Esophagus muscularis mucosa (tissue), 4 donors: ENCODE measurements at regions of chr16 and their contacts with region 1.

Region 1: DNA sequence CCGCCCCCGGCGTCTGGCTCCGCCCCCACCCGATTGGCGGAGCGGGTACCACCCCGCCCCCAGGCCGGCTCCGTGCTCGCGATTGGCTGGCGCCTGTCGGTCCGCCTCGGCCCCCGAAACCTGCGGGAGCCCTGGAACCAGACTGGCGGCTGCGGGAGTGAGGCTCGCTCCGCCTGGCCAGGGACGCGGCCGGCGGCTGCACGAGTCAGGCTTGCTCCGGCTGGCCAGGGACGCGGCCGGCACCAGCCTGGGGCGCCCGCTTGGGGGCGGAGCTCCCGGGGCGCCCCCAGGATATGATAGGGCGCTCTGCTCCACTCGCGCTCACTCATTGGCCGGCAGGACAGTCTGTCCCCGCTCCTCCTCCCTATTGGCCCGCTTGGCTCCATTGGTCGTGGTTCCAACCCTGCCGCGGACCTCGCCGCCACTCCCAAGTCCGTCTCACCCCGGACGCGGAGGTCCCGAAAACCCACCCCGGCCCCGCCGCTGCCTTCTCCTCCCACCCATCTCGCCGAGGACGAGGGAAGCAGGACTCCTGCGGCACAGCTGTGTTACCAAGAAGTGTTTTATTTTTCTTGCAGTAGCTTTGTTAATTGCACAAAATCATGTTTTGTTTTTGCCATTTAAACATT is 340 bp upstream of the ROGDI start:
- DNase-seq: peak; percentile 97
- H3K4me3 ChIP-seq: peak overlapping the region; percentile 73 to 92 (median 83)
- H3K27ac ChIP-seq: peak overlapping the region; percentile 87 to 93 (median 90)
- H3K4me1 ChIP-seq: peaks cover 31 to 48% (median 45%) of the 10 kb centered on the region in 4 donors
- H3K27me3 ChIP-seq: no peaks in the 10 kb centered on the region
- CTCF ChIP-seq: peak in 1 of 3 experiments; percentile 33
- EP300 ChIP-seq: no peak
- POLR2A ChIP-seq: no peak

Region 2: DNA sequence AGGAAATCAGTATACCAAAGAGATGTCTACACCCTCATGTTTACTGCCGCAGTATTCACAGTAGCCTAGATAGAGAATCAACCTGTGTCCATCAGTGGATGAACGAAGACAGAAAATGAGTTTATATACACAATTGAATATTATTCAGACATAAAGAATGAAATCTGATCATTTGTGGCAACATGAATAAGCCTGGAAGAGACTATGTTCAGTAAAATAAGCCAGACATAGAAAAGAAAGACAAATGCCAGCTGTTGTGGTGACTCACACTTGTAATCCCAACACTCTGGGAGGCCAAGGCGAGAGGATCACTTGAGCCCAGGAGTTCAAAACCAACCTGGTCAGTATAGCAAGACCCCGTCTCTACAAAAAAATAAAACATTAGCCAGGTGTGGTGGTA is 93.3 kb before region 1 on chr16:
- intact Hi-C with region 1: no loop called
- DNase-seq: no peak
- H3K4me3 ChIP-seq: no peak overlapping the region
- H3K27ac ChIP-seq: no peak overlapping the region
- H3K4me1 ChIP-seq: no peaks in the 10 kb centered on the region
- H3K27me3 ChIP-seq: no peaks in the 10 kb centered on the region
- CTCF ChIP-seq: no peak
- EP300 ChIP-seq: no peak
- POLR2A ChIP-seq: no peak

Region 3: GRCh38 chr16:4734063-4734729 is 68.6 kb before region 1 on chr16 and contains the starts of genes ANKS3 and DNAAF8:
- intact Hi-C with region 1: loop called (anchors 5 kb)
- DNase-seq: peak; percentile 98
- H3K4me3 ChIP-seq: peak within 1 kb of the TSS; percentile 82 to 99 (median 90)
- H3K27ac ChIP-seq: peak within 1 kb of the TSS; percentile 79 to 97 (median 88)
- H3K4me1 ChIP-seq: peaks cover 12 to 27% (median 19%) of the 10 kb centered on the region in 4 donors
- H3K27me3 ChIP-seq: peaks cover 0 to 3% (median 0%) of the 10 kb centered on the region in 4 donors
- CTCF ChIP-seq: peak in 1 of 3 experiments; percentile 11
- EP300 ChIP-seq: no peak
- POLR2A ChIP-seq: no peak
- total RNA-seq, gene ANKS3: 17.0 to 29.0 (median 24.7) TPM
- total RNA-seq, gene DNAAF8: 0.42 to 1.7 (median 0.94) TPM

Region 4: DNA sequence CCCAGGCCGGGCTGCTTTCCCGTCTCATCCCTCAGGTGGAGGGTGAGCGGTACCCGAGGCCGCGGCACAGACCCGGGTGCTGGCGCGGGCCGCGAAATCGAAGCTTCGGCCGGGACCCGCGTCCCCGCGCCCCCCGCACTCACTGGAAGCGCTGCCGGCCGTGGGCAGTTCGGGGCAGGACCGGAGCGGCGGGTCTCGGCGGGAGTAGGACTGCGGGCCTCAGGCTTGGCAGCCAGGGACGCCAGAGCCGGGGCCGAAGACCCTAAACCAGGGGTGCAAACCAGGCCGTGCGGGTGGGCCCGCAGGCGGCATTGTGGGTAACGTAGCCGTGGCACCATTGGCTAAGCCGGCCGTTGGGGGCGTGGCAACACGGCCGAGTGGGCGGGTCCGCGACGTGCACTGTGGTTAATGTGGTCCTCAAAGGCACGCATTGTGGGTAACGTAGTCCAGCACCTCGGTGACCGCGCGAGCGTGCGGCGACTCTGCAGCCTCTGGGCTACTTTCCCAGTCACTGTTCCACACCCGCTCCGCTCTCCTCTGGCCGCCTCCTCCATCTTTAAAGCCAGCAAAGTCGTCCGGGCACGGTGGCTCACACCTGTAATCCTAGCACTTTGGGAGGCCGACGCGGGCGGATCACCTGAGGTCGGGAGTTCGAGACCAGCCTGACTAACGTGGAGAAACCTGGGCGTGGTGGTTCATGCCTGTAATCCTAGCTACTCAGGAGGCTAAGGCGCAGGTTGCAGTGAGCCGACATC is 35.7 kb before region 1 on chr16 and contains the start of gene ZNF500:
- intact Hi-C with region 1: loop called (anchors 5 kb)
- DNase-seq: peak; percentile 100
- H3K4me3 ChIP-seq: peak within 1 kb of the TSS; percentile 89 to 95 (median 94)
- H3K27ac ChIP-seq: peak within 1 kb of the TSS; percentile 86 to 91 (median 90)
- H3K4me1 ChIP-seq: peaks cover 35 to 54% (median 43%) of the 10 kb centered on the region in 4 donors
- H3K27me3 ChIP-seq: no peaks in the 10 kb centered on the region
- CTCF ChIP-seq: no peak
- EP300 ChIP-seq: no peak
- POLR2A ChIP-seq: no peak
- total RNA-seq, gene ZNF500: 7.5 to 19.4 (median 13.9) TPM

Region 5: GRCh38 chr16:4846891-4847773 is 44.4 kb after region 1 on chr16 and contains the starts of genes GLYR1 and UBN1:
- intact Hi-C with region 1: loop called (anchors 5 kb)
- DNase-seq: peak; percentile 100
- H3K4me3 ChIP-seq: peak within 1 kb of the TSS; percentile 90 to 97 (median 94)
- H3K27ac ChIP-seq: peak within 1 kb of the TSS; percentile 97 to 99 (median 97)
- H3K4me1 ChIP-seq: peaks cover 52 to 61% (median 59%) of the 10 kb centered on the region in 4 donors
- H3K27me3 ChIP-seq: no peaks in the 10 kb centered on the region
- CTCF ChIP-seq: no peak
- EP300 ChIP-seq: no peak
- POLR2A ChIP-seq: peak; percentile 41
- total RNA-seq, gene GLYR1: 81.8 to 111 (median 98.8) TPM
- total RNA-seq, gene UBN1: 21.0 to 48.2 (median 41.1) TPM